ENCODE measurements at regions of chr3 and their contacts with region 1.

Region 1: GRCh38 chr3:148943506-148944205 is 47.7 kb upstream of the GYG1 start:
- DNase-seq: no peak
- ATAC-seq: peak; percentile 52

Region 2: GRCh38 chr3:148309390-148310035 is 634.1 kb before region 1 on chr3:
- intact Hi-C with region 1: loop called in 1 of 2 experiments (anchors 10 kb)
- DNase-seq: no peak
- ATAC-seq: peak; percentile 35

Region 3: GRCh38 chr3:148379763-148380382 is 563.8 kb before region 1 on chr3:
- intact Hi-C with region 1: loop called in 1 of 2 experiments (anchors 5 kb)
- DNase-seq: no peak
- ATAC-seq: peak; percentile 88

Region 4: GRCh38 chr3:148727247-148727646 is 216.4 kb before region 1 on chr3:
- intact Hi-C with region 1: loop called in 1 of 2 experiments (anchors 10 kb)
- DNase-seq: peak in 1 of 2 donors; percentile 26
- ATAC-seq: peak; percentile 76

Region 5: GRCh38 chr3:148861277-148861869 is 82.3 kb before region 1 on chr3:
- intact Hi-C with region 1: loop called (anchors 2 to 10 kb)
- DNase-seq: no peak
- ATAC-seq: peak; percentile 48

Region 6: GRCh38 chr3:149003653-149004305 is 60.1 kb after region 1 on chr3:
- intact Hi-C with region 1: no loop called
- DNase-seq: no peak
- ATAC-seq: no peak

Region 7: GRCh38 chr3:149020196-149020838 is 76.7 kb after region 1 on chr3:
- intact Hi-C with region 1: no loop called
- DNase-seq: no peak
- ATAC-seq: no peak